Sciatic nerve (tissue), 2 donors: ENCODE measurements at regions of chr20 and their contacts with region 1.

Region 1: GRCh38 chr20:5191829-5192569 is 65.2 kb downstream of the CDS2 start:
- DNase-seq: no peak
- ATAC-seq: peak; percentile 88

Region 2: DNA sequence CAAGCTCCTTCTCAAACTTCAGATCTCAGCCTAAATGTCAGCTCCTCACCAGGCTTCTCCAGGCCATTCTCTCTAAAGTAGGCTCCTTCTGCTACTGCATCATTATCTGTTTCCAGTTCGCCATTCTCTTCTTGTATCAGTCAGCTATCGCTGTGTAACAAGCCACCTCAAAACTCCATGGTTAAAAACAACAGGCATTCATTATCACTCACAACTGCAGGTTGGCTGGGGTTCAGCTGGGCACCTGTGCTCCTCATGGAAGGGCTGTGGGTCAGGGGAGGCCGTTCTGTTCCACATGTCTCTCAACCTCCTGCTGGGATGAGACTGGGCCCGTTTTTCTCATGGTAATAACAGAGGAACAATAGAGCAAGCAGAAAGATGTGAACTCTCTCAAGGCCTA is 441.6 kb before region 1 on chr20:
- intact Hi-C with region 1: loop called (anchors 10 kb)
- DNase-seq: no peak
- ATAC-seq: no peak

Region 3: GRCh38 chr20:5126512-5127203 is 65.3 kb before region 1 on chr20 and contains the start of gene CDS2:
- intact Hi-C with region 1: loop called (anchors 5 kb)
- DNase-seq: peak; percentile 100
- ATAC-seq: peak; percentile 98
- total RNA-seq, gene CDS2: 62.7 TPM